ENCODE measurements at regions of chr11 and their contacts with region 1.

Region 1: GRCh38 chr11:131668500-131669400 is 298.3 kb downstream of the NTM start:
- DNase-seq: no peak
- ATAC-seq: peak in 1 of 8 donors; percentile 24
- H3K4me3 ChIP-seq: no peak overlapping the region
- H3K27ac ChIP-seq: no peak overlapping the region
- H3K4me1 ChIP-seq: peaks cover 0 to under 1% (median 0%) of the 10 kb centered on the region in 9 donors
- H3K27me3 ChIP-seq: peaks cover 0 to 19% (median 5%) of the 10 kb centered on the region in 7 donors
- CTCF ChIP-seq: peak; percentile 14 to 67 (median 54)

Region 2: GRCh38 chr11:130166457-130166784 is 1502.3 kb before region 1 on chr11:
- intact Hi-C with region 1: no loop called
- DNase-seq: no peak
- ATAC-seq: peak in 5 of 8 donors; percentile 10 to 77 (median 29)
- H3K4me3 ChIP-seq: no peak overlapping the region
- H3K27ac ChIP-seq: no peak overlapping the region
- H3K4me1 ChIP-seq: peaks cover 0 to 50% (median 4%) of the 10 kb centered on the region in 9 donors
- H3K27me3 ChIP-seq: peaks cover 0 to 25% (median 6%) of the 10 kb centered on the region in 7 donors
- CTCF ChIP-seq: no peak

Region 3: DNA sequence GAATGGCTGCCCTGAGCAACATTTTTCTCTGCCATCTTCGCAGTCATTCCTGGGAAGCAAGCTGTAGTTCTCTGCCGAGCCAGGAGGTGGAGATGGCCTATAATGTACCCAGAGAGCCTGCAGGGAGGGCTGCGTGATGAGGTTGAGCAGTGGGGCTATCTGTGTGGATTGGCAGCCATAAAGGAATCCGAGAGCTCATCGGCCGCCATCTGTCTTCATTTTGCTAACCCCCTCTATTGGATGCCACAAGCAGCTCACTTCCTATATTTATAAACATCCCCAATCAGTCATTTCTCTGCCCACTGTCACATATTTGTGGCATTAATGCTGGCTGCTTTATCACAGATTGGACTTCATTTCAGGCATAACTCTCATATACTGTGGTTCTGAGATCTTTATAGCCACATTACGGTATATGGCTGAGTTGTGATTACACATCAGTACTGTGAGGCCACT is 88.8 kb before region 1 on chr11:
- intact Hi-C with region 1: loop called in 5 of 10 experiments (anchors 5 to 10 kb)
- DNase-seq: no peak
- ATAC-seq: peak in 1 of 8 donors; percentile 39
- H3K4me3 ChIP-seq: no peak overlapping the region
- H3K27ac ChIP-seq: no peak overlapping the region
- H3K4me1 ChIP-seq: no peaks in the 10 kb centered on the region
- H3K27me3 ChIP-seq: peaks cover 0 to 49% (median 38%) of the 10 kb centered on the region in 7 donors
- CTCF ChIP-seq: peak in 7 of 9 donors; percentile 19 to 47 (median 29)

Region 4: GRCh38 chr11:131584785-131585592 is 83.8 kb before region 1 on chr11:
- intact Hi-C with region 1: loop called in 5 of 10 experiments (anchors 5 to 10 kb)
- DNase-seq: no peak
- ATAC-seq: no peak
- H3K4me3 ChIP-seq: no peak overlapping the region
- H3K27ac ChIP-seq: no peak overlapping the region
- H3K4me1 ChIP-seq: no peaks in the 10 kb centered on the region
- H3K27me3 ChIP-seq: peaks cover 0 to 35% (median 23%) of the 10 kb centered on the region in 7 donors
- CTCF ChIP-seq: peak in 6 of 9 donors; percentile 10 to 30 (median 20)

Region 5: DNA sequence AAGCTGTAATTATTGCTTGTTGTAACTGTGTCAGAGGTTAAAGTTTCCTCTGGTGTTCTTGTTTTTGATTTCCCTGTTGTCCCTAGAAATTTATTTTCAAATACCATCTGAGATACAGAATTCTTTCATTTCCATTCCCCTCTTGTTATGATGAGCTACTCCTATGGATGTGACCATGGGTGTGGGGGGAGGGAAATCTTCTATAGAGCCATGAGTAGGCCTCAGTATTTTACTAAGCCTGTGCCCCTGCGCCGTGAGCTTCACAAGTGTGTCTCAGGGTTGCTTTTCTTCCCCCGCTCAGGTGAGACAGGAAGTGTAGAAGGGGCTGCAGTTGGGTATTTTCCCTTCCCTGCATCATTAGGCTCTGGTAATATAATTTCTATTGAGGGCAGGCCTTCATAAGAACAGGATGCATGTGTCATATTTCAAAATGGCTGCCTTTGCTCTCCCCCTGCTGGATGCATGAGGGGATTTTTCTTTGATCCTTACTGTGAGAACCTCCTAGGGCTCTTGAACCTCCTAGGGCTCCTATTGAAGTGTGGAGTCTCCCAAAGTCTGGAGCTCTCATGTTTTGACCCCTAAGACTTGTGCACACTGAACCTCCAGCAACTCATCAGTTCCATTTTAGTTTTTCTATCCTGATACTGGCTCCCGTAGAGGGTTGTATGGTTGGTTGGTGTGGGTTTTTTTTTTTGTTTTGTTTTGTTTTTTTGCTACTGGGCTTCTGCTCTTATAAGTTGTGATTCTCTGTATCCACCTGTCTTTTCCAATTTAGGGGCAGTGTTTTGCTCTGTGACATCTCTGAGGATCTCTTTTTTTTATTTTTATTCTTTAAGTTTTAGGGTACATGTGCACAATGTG is 359.9 kb after region 1 on chr11:
- intact Hi-C with region 1: no loop called
- DNase-seq: peak in 1 of 2 donors; percentile 11
- ATAC-seq: peak in 2 of 8 donors; percentile 44 to 83
- H3K4me3 ChIP-seq: no peak overlapping the region
- H3K27ac ChIP-seq: no peak overlapping the region
- H3K4me1 ChIP-seq: peaks cover 0 to 11% (median 0%) of the 10 kb centered on the region in 9 donors
- H3K27me3 ChIP-seq: no peaks in the 10 kb centered on the region
- CTCF ChIP-seq: peak in 7 of 9 donors; percentile 28 to 58 (median 46)